ENCODE measurements at regions of chr11 and their contacts with region 1.

Region 1: GRCh38 chr11:118171269-118172062 is 5.0 kb downstream of the SCN2B start:
- DNase-seq: peak; percentile 61
- H3K4me3 ChIP-seq: no peak overlapping the region
- H3K27ac ChIP-seq: no peak overlapping the region
- H3K4me1 ChIP-seq: no peaks in the 10 kb centered on the region
- H3K27me3 ChIP-seq: peaks cover 15 to 31% of the 10 kb centered on the region in 2 experiments
- CTCF ChIP-seq: peak; percentile 75 to 91
- POLR2A ChIP-seq: no peak

Region 2: GRCh38 chr11:118051611-118052461 is 119.6 kb before region 1 on chr11:
- CTCF ChIA-PET with region 1: interaction called, 11 read pairs
- POLR2A ChIA-PET with region 1: no interaction called
- dilution Hi-C with region 1: no loop called
- intact Hi-C with region 1: no loop called
- DNase-seq: no peak
- H3K4me3 ChIP-seq: no peak overlapping the region
- H3K27ac ChIP-seq: no peak overlapping the region
- H3K4me1 ChIP-seq: no peaks in the 10 kb centered on the region
- H3K27me3 ChIP-seq: peaks cover 5 to 7% of the 10 kb centered on the region in 2 experiments
- CTCF ChIP-seq: no peak
- POLR2A ChIP-seq: no peak

Region 3: GRCh38 chr11:118145285-118146227 is 25.9 kb before region 1 on chr11:
- CTCF ChIA-PET with region 1: interaction called, 112 read pairs
- POLR2A ChIA-PET with region 1: no interaction called
- dilution Hi-C with region 1: no loop called
- intact Hi-C with region 1: loop called (anchors 1 kb)
- DNase-seq: peak; percentile 59
- H3K4me3 ChIP-seq: peak overlapping the region; percentile 19 to 44 (median 43)
- H3K27ac ChIP-seq: no peak overlapping the region
- H3K4me1 ChIP-seq: no peaks in the 10 kb centered on the region
- H3K27me3 ChIP-seq: peaks cover 40 to 47% of the 10 kb centered on the region in 2 experiments
- CTCF ChIP-seq: peak; percentile 86 to 90
- POLR2A ChIP-seq: no peak

Region 4: DNA sequence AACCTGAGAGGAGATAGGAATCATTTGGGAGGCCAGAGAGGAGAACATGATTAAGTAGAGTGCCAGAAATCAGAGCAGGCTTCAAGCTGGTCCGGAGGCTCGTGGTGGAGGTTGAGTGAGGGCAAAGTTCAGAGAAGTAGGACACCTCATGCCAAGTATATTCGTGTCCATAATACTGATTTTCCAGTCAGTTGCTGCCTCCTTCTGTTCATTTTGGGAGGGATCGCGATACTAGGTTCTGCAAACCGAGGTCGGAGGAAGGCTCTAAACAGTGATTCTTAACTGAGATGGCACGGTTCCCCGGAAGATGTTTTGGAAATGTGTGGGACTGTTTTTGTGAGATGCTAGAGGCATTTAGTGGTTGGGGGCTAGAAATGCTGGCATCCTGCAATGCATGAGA is 119.5 kb after region 1 on chr11:
- CTCF ChIA-PET with region 1: interaction called, 11 read pairs
- POLR2A ChIA-PET with region 1: no interaction called
- dilution Hi-C with region 1: no loop called
- intact Hi-C with region 1: no loop called
- DNase-seq: peak; percentile 68
- H3K4me3 ChIP-seq: no peak overlapping the region
- H3K27ac ChIP-seq: no peak overlapping the region
- H3K4me1 ChIP-seq: no peaks in the 10 kb centered on the region
- H3K27me3 ChIP-seq: no peaks in the 10 kb centered on the region
- CTCF ChIP-seq: peak; percentile 30 to 53
- POLR2A ChIP-seq: no peak

Measured in endothelial cell of umbilical vein (primary cell).